ENCODE measurements at regions of chr11 and their contacts with region 1.

Region 1: DNA sequence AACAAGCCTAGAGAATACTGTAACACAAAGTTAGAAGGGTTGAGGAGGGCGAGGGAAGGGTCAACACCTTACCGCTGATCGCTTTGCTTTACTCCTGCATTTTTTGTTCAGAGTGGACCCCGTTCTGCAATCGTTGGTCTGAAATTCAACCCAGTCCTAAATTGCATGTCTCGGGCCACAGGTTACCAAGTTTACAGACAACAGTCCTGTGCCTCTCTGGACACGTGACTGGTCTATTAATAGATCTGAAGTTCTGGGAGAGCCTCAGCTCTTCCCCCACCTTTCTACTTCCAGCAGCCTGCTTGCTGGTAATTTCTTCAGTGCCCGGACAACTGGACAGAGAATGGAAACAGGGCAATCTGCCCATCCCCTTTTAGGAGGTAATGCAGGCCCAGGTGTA is 74.2 kb downstream of the STIM1 start:
- DNase-seq: no peak
- H3K4me3 Mint-ChIP-seq: no peak overlapping the region
- H3K27ac Mint-ChIP-seq: no peak overlapping the region
- H3K4me1 Mint-ChIP-seq: peaks cover 34% of the 10 kb centered on the region
- H3K27me3 Mint-ChIP-seq: no peaks in the 10 kb centered on the region

Region 2: GRCh38 chr11:3894128-3894731 is 35.4 kb before region 1 on chr11:
- intact Hi-C with region 1: loop called (anchors 5 kb)
- DNase-seq: peak; percentile 63
- H3K4me3 Mint-ChIP-seq: peak overlapping the region; percentile 12
- H3K27ac Mint-ChIP-seq: peak overlapping the region; percentile 76
- H3K4me1 Mint-ChIP-seq: peaks cover 33% of the 10 kb centered on the region
- H3K27me3 Mint-ChIP-seq: no peaks in the 10 kb centered on the region

Measured in activated CD4-positive, alpha-beta T cell treated with anti-CD3 and anti-CD28 coated beads, Interleukin-2, amount 10 ng/mL, durations not matched to agents 24 days and 14 days (primary cell).